PC-3 (cell line): ENCODE measurements at regions of chr6 and their contacts with region 1.

Region 1: GRCh38 chr6:132715204-132715603 is 1.3 kb upstream of the VNN1 start:
- DNase-seq: peak; percentile 72
- ATAC-seq: peak; percentile 84
- H3K4me3 ChIP-seq: no peak overlapping the region
- H3K27ac ChIP-seq: no peak overlapping the region
- H3K4me1 ChIP-seq: 0 out of 2 replicates have a peak, but pooled peaks cover 8% of the 10 kb centered on the region
- H3K27me3 ChIP-seq: no peaks in the 10 kb centered on the region
- CTCF ChIP-seq: peak; percentile 66

Region 2: DNA sequence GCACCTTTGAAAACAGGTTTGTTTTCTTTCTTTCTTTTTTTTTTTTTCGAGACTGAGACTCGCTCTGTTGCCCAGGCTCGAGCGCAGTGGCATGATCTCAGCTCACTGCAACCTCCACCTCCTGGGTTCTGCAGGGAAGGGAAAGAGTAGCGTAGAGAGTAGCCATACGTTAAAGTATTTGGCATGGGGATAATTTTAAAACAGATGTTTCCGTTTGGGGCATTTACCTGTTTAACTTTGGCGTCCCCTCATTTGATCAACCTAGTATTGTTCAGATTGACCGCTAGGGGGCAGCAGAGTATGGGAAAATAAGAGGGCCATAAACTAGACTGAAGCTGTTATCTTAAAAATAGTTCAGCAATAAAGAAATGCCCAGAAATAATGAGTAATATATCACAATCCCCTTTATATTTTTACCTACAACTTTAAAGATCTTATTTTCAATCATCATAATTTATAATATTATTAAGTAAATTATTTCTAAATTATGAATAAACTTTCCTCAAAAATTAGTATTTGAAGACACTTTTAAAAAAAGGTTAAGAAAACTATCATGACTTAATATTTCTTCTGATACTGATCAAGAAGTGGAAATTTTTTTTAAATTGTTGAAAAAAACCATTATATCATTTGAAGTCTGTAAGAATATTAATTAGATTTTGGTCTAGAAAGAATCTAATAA is 184.8 kb before region 1 on chr6:
- CTCF ChIA-PET with region 1: interaction called, 11 read pairs
- POLR2A ChIA-PET with region 1: no interaction called
- intact Hi-C with region 1: loop called (anchors 1 kb)
- DNase-seq: peak; percentile 70
- ATAC-seq: peak; percentile 75
- H3K4me3 ChIP-seq: peak overlapping the region; percentile 66
- H3K27ac ChIP-seq: no peak overlapping the region
- H3K4me1 ChIP-seq: peaks cover 26% of the 10 kb centered on the region
- H3K27me3 ChIP-seq: no peaks in the 10 kb centered on the region
- CTCF ChIP-seq: peak; percentile 69

Region 3: DNA sequence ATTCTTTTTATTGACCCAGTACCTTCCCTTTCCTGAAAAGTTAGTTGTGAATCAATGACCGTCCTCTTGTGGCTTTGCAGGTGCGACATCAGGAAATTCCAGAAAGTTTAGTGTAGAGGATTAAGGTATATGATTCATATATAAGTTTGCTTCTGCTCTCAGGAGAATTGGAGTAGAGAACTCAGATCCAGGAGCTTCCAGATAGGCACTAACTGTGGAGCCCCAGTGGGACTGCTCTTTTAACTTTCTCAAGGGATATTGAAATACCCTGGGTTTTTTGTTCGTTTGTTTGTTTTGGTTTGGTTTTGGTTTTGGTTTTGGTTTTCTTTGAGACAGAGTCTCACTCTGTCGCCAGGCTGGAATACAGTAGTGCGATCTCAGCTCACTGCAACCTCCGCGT is 100.7 kb before region 1 on chr6:
- CTCF ChIA-PET with region 1: no interaction called
- POLR2A ChIA-PET with region 1: no interaction called
- intact Hi-C with region 1: loop called (anchors 2 kb)
- DNase-seq: peak; percentile 87
- ATAC-seq: peak; percentile 77
- H3K4me3 ChIP-seq: peak overlapping the region; percentile 58
- H3K27ac ChIP-seq: peak overlapping the region; percentile 88
- H3K4me1 ChIP-seq: peaks cover 57% of the 10 kb centered on the region
- H3K27me3 ChIP-seq: no peaks in the 10 kb centered on the region
- CTCF ChIP-seq: no peak

Region 4: GRCh38 chr6:132780770-132781371 is 65.7 kb after region 1 on chr6:
- CTCF ChIA-PET with region 1: no interaction called
- POLR2A ChIA-PET with region 1: no interaction called
- intact Hi-C with region 1: loop called (anchors 5 kb)
- DNase-seq: peak; percentile 18
- ATAC-seq: peak; percentile 46; the same call in 1 of the 2 replicates
- H3K4me3 ChIP-seq: no peak overlapping the region
- H3K27ac ChIP-seq: no peak overlapping the region
- H3K4me1 ChIP-seq: no peaks in the 10 kb centered on the region
- H3K27me3 ChIP-seq: no peaks in the 10 kb centered on the region
- CTCF ChIP-seq: peak; percentile 33; the same call in 1 of the 2 replicates